ENCODE measurements at regions of chr7 and their contacts with region 1.

Region 1: GRCh38 chr7:38932509-38933168 is 23.6 kb upstream of the VPS41 start:
- DNase-seq: no peak
- H3K4me3 ChIP-seq: no peak overlapping the region
- H3K27ac ChIP-seq: no peak overlapping the region
- H3K4me1 ChIP-seq: no peaks in the 10 kb centered on the region
- H3K27me3 ChIP-seq: no peaks in the 10 kb centered on the region
- CTCF ChIP-seq: peak; percentile 19 to 79 (median 64)
- EP300 ChIP-seq: no peak
- POLR2A ChIP-seq: no peak

Region 2: DNA sequence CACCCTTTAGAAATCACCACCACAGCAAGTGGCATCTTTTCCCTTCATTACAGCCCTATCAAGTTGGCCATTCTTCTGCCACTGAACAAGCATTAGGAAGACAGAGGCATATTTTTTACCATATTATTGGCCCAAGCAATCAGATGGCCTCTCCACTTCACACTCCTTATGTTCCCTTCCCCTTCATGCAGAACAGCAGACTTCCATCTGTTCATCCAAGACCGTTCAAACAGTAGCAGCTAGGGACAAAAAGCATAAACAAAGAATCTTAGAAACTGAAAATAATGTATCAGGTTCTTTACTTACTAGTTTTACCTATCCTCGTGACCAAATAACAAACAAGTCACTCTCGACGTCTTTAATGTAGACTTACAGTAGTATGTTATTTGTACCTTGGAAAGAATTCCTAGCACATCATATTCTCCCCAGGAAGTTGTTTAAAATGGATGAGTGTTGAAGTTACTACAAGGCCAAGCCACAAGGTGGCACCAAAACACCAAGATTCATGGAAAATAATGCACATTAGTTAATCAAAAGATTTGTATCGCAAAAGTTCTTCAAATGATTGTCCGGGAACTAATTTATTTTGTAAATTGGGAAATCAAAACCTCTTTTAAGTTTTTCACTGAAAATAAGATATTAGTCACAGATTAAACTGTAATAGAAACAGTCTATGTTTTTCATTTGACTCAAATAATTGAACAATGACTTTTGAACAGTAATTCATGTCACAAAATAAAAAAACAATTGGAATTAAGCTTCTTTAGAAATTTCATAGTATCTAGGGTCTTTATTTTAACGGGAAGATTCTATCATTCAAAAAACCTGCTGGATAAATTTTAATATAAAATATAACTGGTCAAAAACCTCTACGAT is 135.8 kb before region 1 on chr7:
- intact Hi-C with region 1: loop called (anchors 10 kb)
- DNase-seq: no peak
- H3K4me3 ChIP-seq: no peak overlapping the region
- H3K27ac ChIP-seq: no peak overlapping the region
- H3K4me1 ChIP-seq: no peaks in the 10 kb centered on the region
- H3K27me3 ChIP-seq: no peaks in the 10 kb centered on the region
- CTCF ChIP-seq: peak; percentile 67 to 74 (median 70)
- EP300 ChIP-seq: no peak
- POLR2A ChIP-seq: no peak

Region 3: DNA sequence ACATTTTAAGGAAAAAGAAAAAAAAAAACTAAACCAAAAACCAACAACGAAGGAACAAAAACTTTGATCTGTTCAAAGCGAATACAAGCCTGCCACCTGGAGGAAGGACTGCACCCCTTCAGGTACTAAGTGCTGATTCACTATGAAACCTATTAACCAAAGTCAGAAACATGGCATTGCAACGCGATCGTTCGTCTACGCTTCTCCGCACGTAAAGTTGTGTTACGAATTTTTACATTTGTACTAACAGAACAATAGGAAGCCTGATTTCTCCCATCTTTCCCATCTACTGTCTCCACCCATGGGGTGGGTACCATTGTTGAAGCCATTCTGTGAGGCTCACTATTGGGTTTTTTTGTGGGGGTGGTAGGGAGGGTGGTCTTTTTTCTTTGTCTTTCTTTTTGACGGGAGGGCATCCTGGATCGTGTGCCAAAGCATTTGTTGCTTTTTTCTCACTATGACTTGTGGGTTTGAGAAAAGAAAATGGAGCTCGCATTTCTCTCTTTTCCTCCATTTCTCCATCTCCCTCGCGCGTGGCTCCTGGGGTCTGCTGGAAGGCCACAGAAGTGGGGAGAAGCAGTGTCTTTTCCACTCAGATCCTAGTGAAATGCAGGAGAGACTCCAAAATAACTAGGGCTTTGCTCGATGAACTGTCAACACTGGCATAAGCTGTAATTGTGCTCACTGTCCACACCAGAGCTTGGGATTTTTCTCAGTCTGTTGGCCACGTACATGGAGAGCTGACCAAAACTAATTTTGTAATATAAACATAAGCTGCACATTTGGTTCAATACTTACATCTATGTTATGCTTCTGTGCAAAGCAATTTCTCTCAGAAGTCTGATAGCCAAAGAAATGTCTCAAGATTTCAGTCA is 532.7 kb after region 1 on chr7:
- intact Hi-C with region 1: loop called (anchors 2 kb)
- DNase-seq: no peak
- H3K4me3 ChIP-seq: peak overlapping the region in 1 of 4 donors; percentile 8
- H3K27ac ChIP-seq: no peak overlapping the region
- H3K4me1 ChIP-seq: no peaks in the 10 kb centered on the region
- H3K27me3 ChIP-seq: no peaks in the 10 kb centered on the region
- CTCF ChIP-seq: peak; percentile 52 to 77 (median 64)
- EP300 ChIP-seq: no peak
- POLR2A ChIP-seq: no peak

Region 4: GRCh38 chr7:39527296-39527695 is 594.7 kb after region 1 on chr7:
- intact Hi-C with region 1: loop called (anchors 5 kb)
- DNase-seq: no peak
- H3K4me3 ChIP-seq: no peak overlapping the region
- H3K27ac ChIP-seq: no peak overlapping the region
- H3K4me1 ChIP-seq: no peaks in the 10 kb centered on the region
- H3K27me3 ChIP-seq: no peaks in the 10 kb centered on the region
- CTCF ChIP-seq: no peak
- EP300 ChIP-seq: no peak
- POLR2A ChIP-seq: no peak